ENCODE measurements at regions of chr11 and their contacts with region 1.

Region 1: DNA sequence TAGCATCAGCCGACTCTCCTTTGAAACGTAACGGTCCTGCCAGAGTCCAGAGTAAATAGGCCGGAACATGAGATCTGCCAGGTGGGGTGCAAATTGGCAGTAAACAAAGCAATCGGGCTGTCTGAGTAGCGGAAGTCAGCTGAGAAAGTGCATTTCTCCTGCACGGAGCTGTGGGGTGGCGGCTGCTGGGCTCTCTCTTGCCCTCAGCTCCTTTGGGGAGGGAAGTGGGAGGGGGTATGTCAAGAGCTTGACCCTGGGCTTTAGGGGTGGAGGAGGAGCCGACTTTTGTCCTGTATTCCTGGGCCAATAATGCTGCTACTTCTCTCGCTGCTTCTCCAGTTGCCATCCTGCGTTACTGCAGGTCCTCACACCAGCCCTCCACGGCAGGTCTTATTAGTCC is 11.6 kb downstream of the GRIK4 start:
- DNase-seq: no peak
- H3K4me3 ChIP-seq: no peak overlapping the region
- H3K27ac ChIP-seq: no peak overlapping the region
- H3K4me1 ChIP-seq: peaks cover 0 to 8% (median 3%) of the 10 kb centered on the region in 4 donors
- H3K27me3 ChIP-seq: peaks cover 0 to 45% of the 10 kb centered on the region in 2 donors
- CTCF ChIP-seq: no peak

Region 2: GRCh38 chr11:120306519-120307242 is 216.5 kb before region 1 on chr11:
- intact Hi-C with region 1: no loop called
- DNase-seq: no peak
- H3K4me3 ChIP-seq: no peak overlapping the region
- H3K27ac ChIP-seq: no peak overlapping the region
- H3K4me1 ChIP-seq: peaks cover 0 to 23% (median 6%) of the 10 kb centered on the region in 4 donors
- H3K27me3 ChIP-seq: no peaks in the 10 kb centered on the region
- CTCF ChIP-seq: peak in 1 of 2 experiments; percentile 8

Region 3: DNA sequence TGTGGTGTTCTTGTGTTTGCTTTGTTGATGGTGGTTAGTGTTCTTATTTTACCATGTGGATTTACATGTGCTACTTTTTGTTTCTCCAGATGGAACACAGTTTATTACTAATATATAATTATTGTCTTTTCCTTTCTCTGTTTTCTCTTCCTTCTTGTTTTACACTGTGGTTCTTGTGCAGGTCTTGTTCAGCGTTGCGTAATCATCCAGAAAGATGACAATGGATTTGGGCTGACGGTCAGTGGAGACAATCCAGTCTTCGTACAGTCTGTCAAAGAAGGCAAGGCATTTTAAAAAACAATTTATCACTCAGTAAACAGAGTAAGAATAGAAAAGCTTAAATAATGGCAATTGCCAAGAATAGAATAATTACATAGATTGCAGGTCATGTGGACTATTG is 102.6 kb before region 1 on chr11:
- intact Hi-C with region 1: no loop called
- DNase-seq: no peak
- H3K4me3 ChIP-seq: no peak overlapping the region
- H3K27ac ChIP-seq: no peak overlapping the region
- H3K4me1 ChIP-seq: no peaks in the 10 kb centered on the region
- H3K27me3 ChIP-seq: no peaks in the 10 kb centered on the region
- CTCF ChIP-seq: no peak

Region 4: GRCh38 chr11:120688163-120688562 is 165.0 kb after region 1 on chr11:
- intact Hi-C with region 1: loop called (anchors 5 kb)
- DNase-seq: no peak
- H3K4me3 ChIP-seq: no peak overlapping the region
- H3K27ac ChIP-seq: no peak overlapping the region
- H3K4me1 ChIP-seq: no peaks in the 10 kb centered on the region
- H3K27me3 ChIP-seq: peaks cover 0 to 39% of the 10 kb centered on the region in 2 donors
- CTCF ChIP-seq: no peak

Measured in tibial artery (tissue), 4 donors.